ENCODE measurements at regions of chrX and their contacts with region 1.

Region 1: DNA sequence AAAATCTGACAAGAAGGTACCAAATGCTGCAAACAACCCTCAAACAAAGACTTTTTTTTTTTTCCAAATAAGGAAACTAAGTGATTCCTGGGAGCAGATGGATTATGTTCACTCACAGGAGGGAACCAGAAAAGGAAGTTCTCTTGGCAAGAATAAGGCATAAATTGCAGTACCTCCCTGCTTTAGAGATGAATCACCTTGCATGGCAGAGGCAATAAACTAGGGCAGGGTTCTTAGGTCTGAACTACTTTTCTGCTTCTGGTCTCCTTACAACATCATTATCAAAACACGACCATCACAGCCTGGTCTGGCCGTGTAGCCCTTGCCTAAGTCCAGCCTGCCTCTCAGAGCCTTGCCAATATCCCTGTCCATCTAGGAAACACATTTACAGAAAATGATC is 6.3 kb downstream of the TMEM31 start:
- DNase-seq: peak; percentile 15
- H3K4me3 ChIP-seq: no peak overlapping the region
- H3K27ac ChIP-seq: peak overlapping the region; percentile 52 to 74 (median 70)
- H3K4me1 ChIP-seq: peaks cover 5 to 10% (median 7%) of the 10 kb centered on the region in 4 donors
- H3K27me3 ChIP-seq: no peaks in the 10 kb centered on the region
- CTCF ChIP-seq: no peak
- EP300 ChIP-seq: no peak
- POLR2A ChIP-seq: no peak

Region 2: DNA sequence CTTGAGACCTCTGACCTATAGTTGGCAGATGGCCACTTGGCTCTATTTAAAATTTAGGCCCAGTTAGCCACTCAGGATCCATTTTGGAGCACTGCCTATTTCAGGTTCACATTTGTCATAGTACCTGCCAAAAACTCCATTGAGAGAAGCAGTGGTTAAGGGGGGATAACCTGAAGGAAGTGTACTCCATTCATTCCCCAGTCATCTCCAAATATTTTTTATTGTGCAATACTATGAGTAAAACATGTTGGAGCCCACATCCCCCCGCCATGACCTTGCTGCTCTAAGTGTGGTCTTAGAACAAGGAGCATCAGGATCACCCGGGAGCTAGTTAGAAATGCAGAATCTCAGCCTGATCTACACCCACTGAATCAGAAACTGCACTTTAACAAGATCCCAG is 80.7 kb after region 1 on chrX:
- in situ Hi-C with region 1: no loop called
- intact Hi-C with region 1: loop called (anchors 5 kb)
- DNase-seq: no peak
- H3K4me3 ChIP-seq: no peak overlapping the region
- H3K27ac ChIP-seq: no peak overlapping the region
- H3K4me1 ChIP-seq: no peaks in the 10 kb centered on the region
- H3K27me3 ChIP-seq: no peaks in the 10 kb centered on the region
- CTCF ChIP-seq: no peak
- EP300 ChIP-seq: no peak
- POLR2A ChIP-seq: no peak

Region 3: GRCh38 chrX:103817502-103817901 is 100.5 kb after region 1 on chrX:
- in situ Hi-C with region 1: no loop called
- intact Hi-C with region 1: no loop called
- DNase-seq: no peak
- H3K4me3 ChIP-seq: no peak overlapping the region
- H3K27ac ChIP-seq: no peak overlapping the region
- H3K4me1 ChIP-seq: no peaks in the 10 kb centered on the region
- H3K27me3 ChIP-seq: no peaks in the 10 kb centered on the region
- CTCF ChIP-seq: peak; percentile 53 to 93 (median 71)
- EP300 ChIP-seq: no peak
- POLR2A ChIP-seq: no peak